Activated T-helper 2 cell treated with anti-CD3 and anti-CD28 coated beads, Interferon-gamma antibody, Interleukin-2, Interleukin-4, amounts not matched to agents 10 μg/mL and 5 μg/mL and 100 μg/mL, durations not matched to agents 14 hours and 24 hours and 36 hours (primary cell): ENCODE measurements at regions of chr2 and their contacts with region 1.

Region 1: DNA sequence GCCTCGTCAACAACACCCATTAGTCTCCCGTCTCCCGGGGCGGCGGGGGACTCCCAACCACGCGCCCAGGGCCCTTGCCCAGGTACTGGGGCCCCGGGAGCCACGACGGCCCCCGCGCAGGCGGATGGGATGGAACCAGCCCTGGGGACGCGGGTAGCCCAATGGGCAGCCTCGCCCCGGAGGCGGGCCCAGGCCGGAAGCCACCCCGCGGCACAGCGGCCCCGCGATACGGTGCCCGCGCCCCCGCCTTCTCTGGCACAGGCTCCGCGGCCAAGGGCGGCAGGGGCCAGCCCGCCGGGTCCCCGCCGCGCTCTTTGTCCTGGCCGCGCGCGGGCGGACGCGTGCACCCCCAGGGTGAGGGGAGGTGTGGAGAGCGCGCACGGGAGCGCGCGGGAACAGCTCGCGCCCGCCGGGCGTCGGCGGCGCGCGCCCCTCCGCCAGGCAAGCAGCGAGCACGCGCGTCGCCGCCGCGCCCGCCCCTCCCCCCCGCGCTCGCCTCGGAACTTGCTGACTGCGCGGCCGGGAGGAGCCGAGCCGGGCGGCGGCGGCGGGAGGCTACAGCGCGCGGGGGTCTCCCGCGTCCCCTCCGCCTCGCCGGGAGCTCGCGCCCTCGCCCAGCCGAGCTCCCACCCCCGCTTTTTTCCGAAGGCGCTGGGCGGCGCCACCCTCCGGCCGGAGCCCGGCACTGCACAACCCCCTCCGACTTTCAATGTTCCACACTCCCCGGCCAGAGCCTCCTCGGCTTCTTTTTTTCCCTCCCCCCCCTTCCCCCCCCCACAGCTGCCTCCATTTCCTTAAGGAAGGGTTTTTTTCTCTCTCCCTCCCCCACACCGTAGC is at the start of gene UBE2E3:
- DNase-seq: peak; percentile 77
- H3K4me3 Mint-ChIP-seq: peak within 1 kb of the TSS; percentile 99
- H3K27ac Mint-ChIP-seq: peak within 1 kb of the TSS; percentile 95
- H3K4me1 Mint-ChIP-seq: peaks cover 36% of the 10 kb centered on the region
- H3K27me3 Mint-ChIP-seq: peaks cover 38% of the 10 kb centered on the region
- total RNA-seq, gene UBE2E3: 49.5 and 53.2 TPM in 2 replicates

Region 2: GRCh38 chr2:180938451-180938850 is 41.9 kb before region 1 on chr2:
- intact Hi-C with region 1: loop called (anchors 5 kb)
- DNase-seq: no peak
- H3K4me3 Mint-ChIP-seq: no peak overlapping the region
- H3K27ac Mint-ChIP-seq: no peak overlapping the region
- H3K4me1 Mint-ChIP-seq: peaks cover 13% of the 10 kb centered on the region
- H3K27me3 Mint-ChIP-seq: peaks cover 10% of the 10 kb centered on the region

Region 3: GRCh38 chr2:181036848-181037603 is 56.7 kb after region 1 on chr2:
- intact Hi-C with region 1: loop called (anchors 1 kb)
- DNase-seq: no peak
- H3K4me3 Mint-ChIP-seq: no peak overlapping the region
- H3K27ac Mint-ChIP-seq: peak overlapping the region; percentile 78
- H3K4me1 Mint-ChIP-seq: peaks cover 26% of the 10 kb centered on the region
- H3K27me3 Mint-ChIP-seq: no peaks in the 10 kb centered on the region

Region 4: GRCh38 chr2:181058378-181059269 is 78.3 kb after region 1 on chr2:
- intact Hi-C with region 1: loop called (anchors 5 kb)
- DNase-seq: no peak
- H3K4me3 Mint-ChIP-seq: no peak overlapping the region
- H3K27ac Mint-ChIP-seq: no peak overlapping the region
- H3K4me1 Mint-ChIP-seq: peaks cover 7% of the 10 kb centered on the region
- H3K27me3 Mint-ChIP-seq: no peaks in the 10 kb centered on the region

Region 5: GRCh38 chr2:181235683-181236459 is 255.5 kb after region 1 on chr2:
- intact Hi-C with region 1: no loop called
- DNase-seq: no peak
- H3K4me3 Mint-ChIP-seq: no peak overlapping the region
- H3K27ac Mint-ChIP-seq: no peak overlapping the region
- H3K4me1 Mint-ChIP-seq: peaks cover 65% of the 10 kb centered on the region
- H3K27me3 Mint-ChIP-seq: no peaks in the 10 kb centered on the region

Region 6: DNA sequence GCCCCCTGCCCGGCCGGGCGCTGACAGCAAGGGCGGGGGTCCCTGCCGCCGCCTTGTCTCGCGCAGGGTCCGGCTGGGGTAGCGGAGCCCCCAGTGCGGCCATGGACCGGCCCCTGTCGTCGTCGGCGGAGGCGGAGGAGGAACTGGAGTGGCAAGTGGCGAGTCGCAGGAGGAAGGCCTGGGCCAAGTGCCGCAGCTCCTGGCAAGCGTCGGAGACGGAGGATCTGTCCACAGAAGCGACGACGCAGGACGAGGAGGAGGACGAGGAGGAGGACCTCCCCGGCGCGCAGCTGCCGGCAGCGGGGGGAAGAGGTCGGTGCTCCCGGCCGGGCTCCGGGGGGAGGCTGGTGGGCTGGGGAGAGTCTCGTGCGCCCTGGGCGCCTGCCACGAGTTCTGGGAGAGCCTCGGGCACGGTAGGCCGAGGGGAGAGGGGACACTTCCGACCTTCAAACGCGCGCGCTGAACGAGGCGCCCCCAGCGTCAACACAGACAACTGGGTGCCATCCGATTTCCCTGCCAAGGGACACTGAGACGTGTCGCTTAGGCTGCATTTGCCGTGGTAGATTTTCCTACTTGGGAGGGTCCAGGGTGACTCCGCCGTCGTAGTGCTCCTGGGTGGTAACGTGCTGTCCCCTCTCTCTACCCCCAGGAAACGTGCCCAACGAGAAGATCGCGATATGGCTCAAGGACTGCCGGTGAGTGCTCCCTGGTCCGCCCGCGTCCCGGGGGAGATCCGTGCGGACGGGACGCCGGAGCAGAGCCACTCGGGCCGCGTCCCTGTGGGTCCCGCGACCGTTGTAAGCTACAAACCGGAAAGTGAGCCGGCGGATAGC is 911.9 kb after region 1 on chr2:
- intact Hi-C with region 1: loop called (anchors 2 kb)
- DNase-seq: peak; percentile 61
- H3K4me3 Mint-ChIP-seq: peak overlapping the region; percentile 90
- H3K27ac Mint-ChIP-seq: peak overlapping the region; percentile 90
- H3K4me1 Mint-ChIP-seq: peaks cover 27% of the 10 kb centered on the region
- H3K27me3 Mint-ChIP-seq: peaks cover 19% of the 10 kb centered on the region

Region 7: GRCh38 chr2:182726473-182726872 is 1746.1 kb after region 1 on chr2:
- intact Hi-C with region 1: loop called (anchors 10 kb)
- DNase-seq: no peak
- H3K4me3 Mint-ChIP-seq: no peak overlapping the region
- H3K27ac Mint-ChIP-seq: no peak overlapping the region
- H3K4me1 Mint-ChIP-seq: no peaks in the 10 kb centered on the region
- H3K27me3 Mint-ChIP-seq: no peaks in the 10 kb centered on the region